GM12878 (cell line): ENCODE measurements at regions of chr13 and their contacts with region 1.

Region 1: GRCh38 chr13:110662777-110663443 is 43.0 kb downstream of the CARS2 start:
- DNase-seq: no peak
- ATAC-seq: no peak
- H3K4me3 ChIP-seq: no peak overlapping the region
- H3K27ac ChIP-seq: no peak overlapping the region
- H3K4me1 ChIP-seq: peaks cover 5% of the 10 kb centered on the region
- H3K27me3 ChIP-seq: no peaks in the 10 kb centered on the region
- CTCF ChIP-seq: no peak
- EP300 ChIP-seq: no peak
- POLR2A ChIP-seq: no peak
- RAD21 ChIP-seq: no peak

Region 2: GRCh38 chr13:110676595-110677587 is 14.0 kb after region 1 on chr13:
- CTCF ChIA-PET with region 1: interaction called, 3 read pairs
- POLR2A ChIA-PET with region 1: interaction called, 4 read pairs
- RAD21 ChIA-PET with region 1: interaction called, 6 read pairs
- SMC1A ChIA-PET with region 1: interaction called, 4 read pairs
- in situ Hi-C with region 1: no loop called
- intact Hi-C with region 1: loop called (anchors 1 kb)
- DNase-seq: peak; percentile 63
- ATAC-seq: peak; percentile 89
- H3K4me3 ChIP-seq: peak overlapping the region; percentile 24; the same call in 1 of the 2 replicates
- H3K27ac ChIP-seq: peak overlapping the region; percentile 86
- H3K4me1 ChIP-seq: peaks cover 16% of the 10 kb centered on the region
- H3K27me3 ChIP-seq: no peaks in the 10 kb centered on the region
- CTCF ChIP-seq: no peak
- EP300 ChIP-seq: no peak
- POLR2A ChIP-seq: 0 out of 2 replicates have a peak, but pooled peaks have one; percentile 16
- RAD21 ChIP-seq: no peak

Region 3: DNA sequence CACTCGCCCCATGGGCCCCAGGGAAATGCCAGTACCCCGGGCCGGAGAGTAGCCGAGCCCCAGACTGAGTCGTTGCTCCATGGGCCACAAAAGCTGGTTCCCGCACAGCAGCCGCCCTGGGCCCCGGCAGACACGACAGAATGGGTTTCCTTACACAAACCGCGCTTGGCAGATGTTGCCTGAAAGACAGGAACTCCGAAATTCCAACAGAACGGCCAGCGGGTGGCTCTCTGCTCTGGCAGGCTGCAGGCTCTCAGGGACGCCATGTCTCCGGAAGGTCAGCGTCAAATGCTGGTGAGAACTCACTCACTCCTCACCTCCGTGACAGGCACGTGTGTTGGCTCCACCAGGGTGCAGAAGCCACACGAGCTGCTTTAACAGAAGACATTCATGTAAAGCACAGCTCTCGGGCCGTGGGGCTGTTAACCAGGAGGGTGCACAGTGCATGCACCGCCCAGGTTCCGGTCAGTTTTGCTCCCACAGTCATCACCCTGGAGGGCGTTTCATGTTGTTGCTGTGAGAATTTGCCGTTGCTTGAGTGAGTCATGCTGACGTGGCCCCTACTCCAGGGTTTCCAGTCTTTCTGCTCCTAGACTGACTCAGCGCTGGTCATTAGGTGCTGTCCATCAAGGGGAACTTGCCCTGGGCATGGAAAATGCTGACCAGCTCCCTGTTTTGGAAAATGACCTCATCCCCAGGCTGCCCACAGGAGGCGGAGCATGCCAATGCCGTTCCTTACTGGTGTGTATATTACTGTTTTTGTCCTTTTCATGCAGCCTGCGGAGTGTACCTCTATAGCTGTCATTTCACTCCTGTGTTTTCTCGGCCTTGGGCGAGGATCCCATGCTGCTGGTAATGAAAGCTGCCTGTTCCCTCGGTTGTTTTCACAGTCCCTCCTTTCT is 207.1 kb after region 1 on chr13:
- CTCF ChIA-PET with region 1: no interaction called
- POLR2A ChIA-PET with region 1: no interaction called
- RAD21 ChIA-PET with region 1: no interaction called
- SMC1A ChIA-PET with region 1: no interaction called
- in situ Hi-C with region 1: no loop called
- intact Hi-C with region 1: no loop called
- DNase-seq: no peak
- ATAC-seq: peak; percentile 37
- H3K4me3 ChIP-seq: no peak overlapping the region
- H3K27ac ChIP-seq: no peak overlapping the region
- H3K4me1 ChIP-seq: no peaks in the 10 kb centered on the region
- H3K27me3 ChIP-seq: no peaks in the 10 kb centered on the region
- CTCF ChIP-seq: no peak
- EP300 ChIP-seq: no peak
- POLR2A ChIP-seq: no peak
- RAD21 ChIP-seq: no peak